ENCODE measurements at regions of chr22 and their contacts with region 1.

Region 1: GRCh38 chr22:22195265-22196017 is 49.1 kb upstream of the VPREB1 start:
- DNase-seq: peak; percentile 64 to 95
- H3K4me3 ChIP-seq: no peak overlapping the region
- H3K27ac ChIP-seq: no peak overlapping the region
- H3K4me1 ChIP-seq: no peaks in the 10 kb centered on the region
- H3K27me3 ChIP-seq: peaks cover 58 to 66% (median 64%) of the 10 kb centered on the region in 4 experiments
- CTCF ChIP-seq: peak; percentile 94 to 98 (median 98)
- EP300 ChIP-seq: no peak
- POLR2A ChIP-seq: no peak
- RAD21 ChIP-seq: peak; percentile 86 to 87

Region 2: GRCh38 chr22:21984793-21985613 is 210.4 kb before region 1 on chr22:
- CTCF ChIA-PET with region 1: no interaction called
- POLR2A ChIA-PET with region 1: no interaction called
- DNase-seq: peak; percentile 36 to 78
- H3K4me3 ChIP-seq: no peak overlapping the region
- H3K27ac ChIP-seq: no peak overlapping the region
- H3K4me1 ChIP-seq: peaks cover 0 to under 1% (median 0%) of the 10 kb centered on the region in 4 experiments; a peak in 2 of 7 replicates
- H3K27me3 ChIP-seq: peaks cover 26 to 41% (median 39%) of the 10 kb centered on the region in 4 experiments
- CTCF ChIP-seq: peak; percentile 76 to 88 (median 77)
- EP300 ChIP-seq: no peak
- POLR2A ChIP-seq: no peak
- RAD21 ChIP-seq: peak; percentile 72 to 78

Region 3: GRCh38 chr22:22125028-22125578 is 70.3 kb before region 1 on chr22:
- CTCF ChIA-PET with region 1: no interaction called
- POLR2A ChIA-PET with region 1: no interaction called
- DNase-seq: no peak
- H3K4me3 ChIP-seq: no peak overlapping the region; a peak in 1 of 8 replicates
- H3K27ac ChIP-seq: no peak overlapping the region
- H3K4me1 ChIP-seq: peaks cover 0 to 7% (median 4%) of the 10 kb centered on the region in 4 experiments; a peak in 2 of 7 replicates
- H3K27me3 ChIP-seq: peaks cover 24 to 80% (median 58%) of the 10 kb centered on the region in 4 experiments
- CTCF ChIP-seq: no peak
- EP300 ChIP-seq: no peak
- POLR2A ChIP-seq: no peak
- RAD21 ChIP-seq: no peak

Region 4: DNA sequence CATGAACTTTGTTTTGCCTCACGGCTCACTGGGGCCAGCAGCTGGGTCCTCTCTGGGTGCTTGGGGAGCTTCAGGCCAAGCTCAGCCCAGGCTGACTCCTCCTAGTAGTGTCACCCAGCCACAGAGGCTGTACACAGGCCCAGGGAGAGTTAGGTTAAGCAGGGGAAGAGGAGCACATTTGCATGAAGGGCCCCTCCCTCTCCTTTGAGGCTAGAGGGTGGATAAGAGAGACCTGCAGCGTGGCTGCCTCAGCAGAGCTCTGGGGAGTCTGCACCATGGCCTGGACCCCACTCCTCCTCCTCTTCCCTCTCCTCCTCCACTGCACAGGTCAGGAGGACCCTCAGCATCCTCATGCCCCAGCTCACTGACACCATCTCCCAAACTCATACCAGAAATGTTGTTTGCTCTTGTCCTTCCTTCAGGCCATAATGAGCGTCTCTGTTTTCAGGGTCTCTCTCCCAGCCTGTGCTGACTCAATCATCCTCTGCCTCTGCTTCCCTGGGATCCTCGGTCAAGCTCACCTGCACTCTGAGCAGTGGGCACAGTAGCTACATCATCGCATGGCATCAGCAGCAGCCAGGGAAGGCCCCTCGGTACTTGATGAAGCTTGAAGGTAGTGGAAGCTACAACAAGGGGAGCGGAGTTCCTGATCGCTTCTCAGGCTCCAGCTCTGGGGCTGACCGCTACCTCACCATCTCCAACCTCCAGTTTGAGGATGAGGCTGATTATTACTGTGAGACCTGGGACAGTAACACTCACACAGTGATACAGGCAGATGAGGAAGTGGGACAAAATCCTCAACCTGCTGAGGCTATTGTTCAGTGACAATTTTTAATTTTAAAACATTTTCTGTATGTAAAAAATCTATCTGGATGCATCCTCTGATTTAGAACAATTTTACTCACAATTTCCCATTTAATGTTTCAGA is 33.3 kb before region 1 on chr22:
- CTCF ChIA-PET with region 1: interaction called, 19 read pairs
- POLR2A ChIA-PET with region 1: no interaction called
- DNase-seq: no peak
- H3K4me3 ChIP-seq: no peak overlapping the region
- H3K27ac ChIP-seq: no peak overlapping the region
- H3K4me1 ChIP-seq: no peaks in the 10 kb centered on the region
- H3K27me3 ChIP-seq: peaks cover 76 to 85% (median 82%) of the 10 kb centered on the region in 4 experiments
- CTCF ChIP-seq: no peak
- EP300 ChIP-seq: no peak
- POLR2A ChIP-seq: no peak
- RAD21 ChIP-seq: no peak

Region 5: GRCh38 chr22:22207845-22208564 is 12.6 kb after region 1 on chr22:
- CTCF ChIA-PET with region 1: interaction called, 49 read pairs
- POLR2A ChIA-PET with region 1: interaction called, 3 read pairs
- DNase-seq: peak; percentile 36 to 92
- H3K4me3 ChIP-seq: no peak overlapping the region
- H3K27ac ChIP-seq: no peak overlapping the region
- H3K4me1 ChIP-seq: no peaks in the 10 kb centered on the region
- H3K27me3 ChIP-seq: peaks cover 78 to 99% (median 89%) of the 10 kb centered on the region in 4 experiments
- CTCF ChIP-seq: peak; percentile 74 to 86 (median 81)
- EP300 ChIP-seq: no peak
- POLR2A ChIP-seq: no peak
- RAD21 ChIP-seq: peak; percentile 85 to 86

Measured in H1 (cell line).